Dendritic cell treated with granulocyte-macrophage colony-stimulating factor and Interleukin-4, amounts not matched to agents 40 ng/mL and 50 ng/mL, for 4 days (primary cell): ENCODE measurements at regions of chr14 and their contacts with region 1.

Region 1: GRCh38 chr14:23120541-23121251 is 1.6 kb upstream of the CEBPE start:
- H3K4me3 Mint-ChIP-seq: peak overlapping the region; percentile 27
- H3K27ac Mint-ChIP-seq: peak overlapping the region; percentile 83
- H3K4me1 Mint-ChIP-seq: peaks cover 74% of the 10 kb centered on the region
- H3K27me3 Mint-ChIP-seq: peaks cover 3% of the 10 kb centered on the region

Region 2: DNA sequence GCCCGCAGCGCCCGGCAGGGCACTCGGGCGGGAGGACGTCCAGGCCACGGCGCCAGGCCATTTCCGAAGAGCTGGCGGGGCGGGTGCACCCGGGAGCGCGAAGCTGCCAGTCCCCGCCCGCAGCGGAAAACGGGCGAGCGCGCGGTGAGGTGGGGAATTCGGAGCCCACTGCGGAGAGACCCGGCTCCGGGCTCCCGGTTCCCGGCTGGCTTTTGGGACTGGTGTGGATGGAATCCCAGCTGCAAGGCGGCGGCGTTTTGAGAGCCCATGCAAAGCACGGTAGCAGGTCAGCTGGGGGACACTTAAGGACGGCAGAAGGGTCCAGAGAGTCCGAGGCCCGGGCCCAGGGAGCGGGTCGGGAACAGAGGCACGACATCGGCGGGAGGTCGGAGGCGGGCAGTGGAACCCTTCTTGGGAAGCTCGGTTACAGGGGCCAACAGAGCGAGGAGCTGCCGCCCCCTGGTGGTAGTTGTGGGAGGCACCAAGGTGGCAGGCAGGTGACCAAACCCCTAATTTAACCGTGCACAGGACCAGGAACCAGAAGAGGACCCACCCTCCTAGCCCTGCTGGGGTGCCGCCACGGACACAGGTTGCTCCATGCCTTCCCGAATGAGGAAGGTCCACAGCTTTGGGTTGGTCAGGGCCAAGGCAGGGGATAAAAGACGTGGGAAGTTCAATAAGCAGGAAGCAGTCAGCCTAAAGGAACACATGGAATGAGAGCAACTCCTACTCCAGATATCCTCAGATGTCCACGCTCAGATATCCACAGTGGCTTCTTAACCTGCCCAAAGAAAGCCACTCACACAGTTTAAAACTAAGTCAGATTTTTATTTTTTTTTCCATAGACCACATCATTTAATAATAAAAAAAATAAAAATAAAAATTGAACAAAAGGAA is 62.7 kb before region 1 on chr14:
- intact Hi-C with region 1: no loop called
- H3K4me3 Mint-ChIP-seq: peak overlapping the region; percentile 78
- H3K27ac Mint-ChIP-seq: no peak overlapping the region
- H3K4me1 Mint-ChIP-seq: peaks cover 30% of the 10 kb centered on the region
- H3K27me3 Mint-ChIP-seq: peaks cover 20% of the 10 kb centered on the region

Region 3: DNA sequence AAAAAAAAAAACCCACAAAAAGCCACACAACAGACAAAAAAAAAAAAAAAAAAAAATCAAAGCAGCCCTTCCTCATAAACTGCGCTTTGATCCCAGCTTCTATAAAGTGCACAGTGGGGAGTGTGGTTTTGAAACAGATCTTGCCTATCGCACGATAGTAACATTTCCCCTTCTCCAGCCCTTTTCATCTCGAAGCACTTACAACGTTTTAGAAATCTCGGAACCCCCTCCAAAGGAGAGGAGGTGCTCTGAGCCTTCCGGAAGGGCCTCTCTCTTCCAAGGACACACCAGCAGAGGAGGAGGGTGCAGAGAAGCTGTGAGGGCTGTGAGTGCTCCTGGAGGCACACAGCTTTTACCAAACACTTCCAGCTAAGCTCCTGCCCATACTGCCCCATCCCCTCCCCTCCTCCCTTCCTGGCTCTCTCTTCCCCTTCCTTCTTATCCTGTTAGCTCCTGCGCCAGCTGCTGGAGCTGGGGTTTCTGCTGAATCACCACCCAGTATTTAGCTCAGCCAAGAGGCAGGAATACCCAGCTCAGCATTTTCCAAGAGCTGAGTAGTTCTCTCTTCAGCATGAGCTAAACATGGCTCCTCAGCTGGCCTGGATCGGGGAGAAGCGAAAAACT is 34.4 kb after region 1 on chr14:
- intact Hi-C with region 1: loop called (anchors 2 kb)
- H3K4me3 Mint-ChIP-seq: peak overlapping the region; percentile 63
- H3K27ac Mint-ChIP-seq: peak overlapping the region; percentile 91
- H3K4me1 Mint-ChIP-seq: peaks cover 78% of the 10 kb centered on the region
- H3K27me3 Mint-ChIP-seq: no peaks in the 10 kb centered on the region

Region 4: DNA sequence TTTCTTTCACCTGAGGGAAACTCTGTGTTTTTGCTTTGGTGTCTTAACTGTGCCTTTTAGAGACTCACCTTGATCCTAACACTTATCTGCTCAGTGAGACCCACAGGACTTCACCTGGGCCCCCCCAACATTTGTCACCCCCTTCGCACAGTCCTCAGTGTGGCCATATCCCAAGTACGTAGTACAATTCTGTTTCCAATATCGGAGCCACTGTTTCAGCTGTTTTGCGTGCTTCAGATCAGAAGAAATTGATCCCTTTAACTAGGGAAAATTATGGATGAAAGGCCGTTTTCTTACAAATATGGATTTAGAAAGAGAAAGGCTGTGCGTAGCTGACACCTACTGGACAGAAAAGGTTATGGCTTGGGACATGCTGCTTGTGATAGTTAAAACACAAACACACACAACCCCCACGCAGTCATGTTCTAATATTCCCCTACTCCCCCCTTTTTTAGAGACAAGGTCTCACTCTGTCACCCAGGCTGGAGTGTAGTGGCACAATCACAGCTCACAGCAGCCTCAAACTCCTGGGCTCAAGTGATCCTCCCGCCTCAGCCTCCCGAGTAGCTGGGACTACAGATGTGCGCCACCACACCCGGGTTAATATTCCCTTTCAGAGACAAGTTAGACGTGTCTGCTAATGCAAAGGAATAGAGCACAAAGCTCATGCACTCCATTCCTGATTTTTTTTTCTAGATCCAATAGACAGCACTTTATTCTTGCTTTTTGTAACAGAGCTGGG is 66.4 kb after region 1 on chr14:
- intact Hi-C with region 1: loop called (anchors 1 kb)
- H3K4me3 Mint-ChIP-seq: no peak overlapping the region
- H3K27ac Mint-ChIP-seq: no peak overlapping the region
- H3K4me1 Mint-ChIP-seq: peaks cover 12% of the 10 kb centered on the region
- H3K27me3 Mint-ChIP-seq: no peaks in the 10 kb centered on the region

Region 5: DNA sequence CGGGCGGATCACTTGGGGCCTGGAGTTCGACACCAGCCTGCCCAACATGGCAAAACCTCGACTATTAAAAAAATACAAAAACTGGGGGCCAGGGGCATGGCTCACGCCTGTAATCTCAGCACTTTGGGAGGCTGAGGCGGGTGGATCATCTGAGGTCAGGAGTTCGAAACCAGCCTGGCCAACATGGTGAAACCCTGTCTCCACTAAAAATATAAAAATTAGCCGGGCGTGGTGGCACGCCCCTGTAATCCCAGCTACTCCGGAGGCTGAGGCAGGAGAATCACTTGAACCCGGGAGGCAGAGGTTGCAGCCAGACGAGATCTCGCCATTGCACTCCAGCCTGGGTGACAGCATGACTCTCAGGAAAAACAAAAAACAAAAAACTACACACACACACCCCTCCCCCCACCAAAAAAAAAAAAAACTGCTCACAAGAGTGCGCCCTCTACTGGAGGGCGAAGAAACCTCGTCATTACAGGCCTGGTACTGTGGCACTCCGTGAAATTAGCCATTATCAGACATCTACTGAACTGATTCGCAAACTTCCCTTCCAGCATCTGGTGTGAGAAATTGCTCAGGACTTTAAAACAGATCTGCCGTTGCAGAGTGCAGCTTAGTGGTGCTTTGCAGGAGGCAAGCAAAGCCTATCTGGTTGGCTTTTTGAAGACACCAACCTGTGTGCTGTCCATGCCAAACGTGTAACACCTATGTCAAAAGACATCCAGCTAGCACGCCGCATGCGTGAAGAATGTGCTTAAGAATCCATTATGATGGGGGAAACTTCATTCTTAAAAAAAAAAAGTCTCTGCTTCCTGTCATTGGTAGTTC is 174.3 kb after region 1 on chr14:
- intact Hi-C with region 1: loop called (anchors 2 kb)
- H3K4me3 Mint-ChIP-seq: peak overlapping the region; percentile 37
- H3K27ac Mint-ChIP-seq: peak overlapping the region; percentile 69
- H3K4me1 Mint-ChIP-seq: peaks cover 31% of the 10 kb centered on the region
- H3K27me3 Mint-ChIP-seq: peaks cover 4% of the 10 kb centered on the region